ENCODE measurements at regions of chr13 and their contacts with region 1.

Region 1: DNA sequence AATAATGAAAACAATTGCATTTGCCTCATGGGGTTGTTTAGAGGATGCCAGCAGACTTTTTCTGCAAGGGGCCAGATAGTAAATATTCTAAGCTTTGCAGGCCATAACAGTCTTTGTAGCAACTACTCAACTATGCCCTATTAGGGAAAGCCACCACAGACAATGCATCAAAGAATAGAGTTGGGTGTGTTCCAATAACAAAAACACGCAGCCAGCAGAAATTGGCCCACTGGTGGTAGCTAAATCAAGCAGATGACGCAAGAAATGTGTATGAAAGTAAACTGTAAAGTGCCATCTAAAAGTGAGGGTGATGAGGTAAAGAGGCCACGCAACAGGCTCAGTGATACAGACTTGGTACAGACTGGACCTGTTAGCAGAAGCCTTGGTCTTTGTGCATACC is 75.2 kb upstream of the SIAH3 start:
- DNase-seq: no peak
- H3K4me3 ChIP-seq: no peak overlapping the region
- H3K27ac ChIP-seq: no peak overlapping the region
- H3K4me1 ChIP-seq: no peaks in the 10 kb centered on the region
- H3K27me3 ChIP-seq: no peaks in the 10 kb centered on the region
- CTCF ChIP-seq: no peak
- EP300 ChIP-seq: no peak
- POLR2A ChIP-seq: no peak

Region 2: DNA sequence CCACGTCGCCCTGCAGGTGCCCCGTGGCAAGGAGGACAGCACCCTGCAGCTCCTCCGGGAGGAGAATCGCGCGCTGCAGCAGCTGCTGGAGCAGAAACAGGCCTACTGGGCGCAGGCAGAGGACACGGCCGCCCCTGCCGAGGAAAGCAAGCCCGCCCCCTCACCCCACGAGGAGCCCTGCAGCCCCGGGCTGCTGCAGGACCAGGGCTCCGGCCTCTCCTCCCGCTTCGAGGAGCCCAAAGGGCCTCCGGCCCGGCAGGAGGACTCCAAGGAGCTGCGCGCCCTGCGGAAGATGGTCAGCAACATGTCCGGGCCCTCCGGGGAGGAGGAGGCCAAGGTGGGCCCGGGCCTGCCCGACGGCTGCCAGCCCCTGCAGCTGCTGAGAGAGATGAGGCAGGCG is 213.0 kb before region 1 on chr13:
- intact Hi-C with region 1: no loop called
- DNase-seq: no peak
- H3K4me3 ChIP-seq: no peak overlapping the region
- H3K27ac ChIP-seq: no peak overlapping the region
- H3K4me1 ChIP-seq: no peaks in the 10 kb centered on the region
- H3K27me3 ChIP-seq: no peaks in the 10 kb centered on the region
- CTCF ChIP-seq: no peak
- EP300 ChIP-seq: no peak
- POLR2A ChIP-seq: no peak

Region 3: DNA sequence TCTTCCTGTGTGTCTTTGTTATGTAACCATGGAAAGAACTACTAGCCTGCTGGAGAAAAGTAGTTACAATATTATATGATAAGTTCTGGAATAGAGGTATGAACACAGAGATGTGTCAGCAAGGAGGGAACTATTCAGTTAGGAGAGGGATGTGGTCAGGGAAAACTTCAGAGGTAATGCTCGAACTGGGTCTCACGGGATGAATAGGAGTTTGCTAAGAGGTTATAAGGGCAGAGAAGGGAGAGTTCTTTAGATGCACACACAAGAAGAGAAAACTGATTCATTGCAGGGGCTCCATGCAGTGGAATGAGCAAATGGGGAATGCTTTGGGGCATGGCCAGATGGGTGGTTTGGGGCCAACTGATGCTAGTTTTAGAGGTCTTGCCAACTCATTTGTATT is 29.2 kb before region 1 on chr13:
- intact Hi-C with region 1: loop called in 1 of 4 experiments (anchors 1 kb)
- DNase-seq: no peak
- H3K4me3 ChIP-seq: no peak overlapping the region
- H3K27ac ChIP-seq: no peak overlapping the region
- H3K4me1 ChIP-seq: no peaks in the 10 kb centered on the region
- H3K27me3 ChIP-seq: no peaks in the 10 kb centered on the region
- CTCF ChIP-seq: no peak
- EP300 ChIP-seq: no peak
- POLR2A ChIP-seq: no peak

Region 4: DNA sequence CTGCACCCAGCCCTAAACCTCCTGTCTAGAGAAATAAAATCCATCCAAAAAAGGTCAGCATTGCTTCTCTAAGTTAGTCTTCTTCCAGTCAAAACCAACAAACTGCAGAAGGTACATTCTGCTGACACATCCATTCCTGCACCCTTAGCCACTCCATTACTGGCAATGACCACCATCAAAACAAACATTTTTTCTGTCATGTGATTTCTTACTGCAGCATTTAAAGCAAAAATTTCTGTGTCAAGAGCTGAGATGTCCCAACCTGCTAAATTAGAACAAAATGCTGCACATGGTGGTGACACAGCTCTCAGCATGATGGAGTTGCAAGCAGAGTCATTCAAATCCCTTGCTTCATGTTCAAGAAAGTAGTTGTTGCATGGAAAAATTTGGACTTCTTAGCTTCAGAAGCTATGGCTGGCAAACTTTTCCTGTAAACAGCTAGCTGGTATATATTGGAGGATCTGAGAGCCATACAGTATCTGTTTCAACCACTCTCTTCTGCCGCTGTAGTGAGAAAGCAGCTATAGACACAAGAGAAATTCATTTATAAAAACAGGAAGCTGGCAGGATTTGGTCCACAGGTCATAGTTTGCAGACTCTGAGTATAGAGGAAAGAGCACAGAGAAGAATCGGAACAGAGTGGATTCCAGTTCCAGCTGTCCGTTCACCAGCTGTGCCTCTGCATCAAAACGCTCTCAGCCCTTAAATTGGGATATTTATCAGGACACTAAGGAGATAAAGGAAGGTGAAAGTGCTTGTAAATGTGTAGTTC is 443.0 kb after region 1 on chr13:
- intact Hi-C with region 1: no loop called
- DNase-seq: no peak
- H3K4me3 ChIP-seq: no peak overlapping the region
- H3K27ac ChIP-seq: no peak overlapping the region
- H3K4me1 ChIP-seq: peaks cover 5% of the 10 kb centered on the region
- H3K27me3 ChIP-seq: no peaks in the 10 kb centered on the region
- CTCF ChIP-seq: no peak
- EP300 ChIP-seq: no peak
- POLR2A ChIP-seq: no peak